Cardiac septum (tissue), 1 donor: ENCODE measurements at regions of chr5 and their contacts with region 1.

Region 1: GRCh38 chr5:138223532-138223931 is 10.4 kb upstream of the CDC23 start:
- DNase-seq: no peak

Region 2: DNA sequence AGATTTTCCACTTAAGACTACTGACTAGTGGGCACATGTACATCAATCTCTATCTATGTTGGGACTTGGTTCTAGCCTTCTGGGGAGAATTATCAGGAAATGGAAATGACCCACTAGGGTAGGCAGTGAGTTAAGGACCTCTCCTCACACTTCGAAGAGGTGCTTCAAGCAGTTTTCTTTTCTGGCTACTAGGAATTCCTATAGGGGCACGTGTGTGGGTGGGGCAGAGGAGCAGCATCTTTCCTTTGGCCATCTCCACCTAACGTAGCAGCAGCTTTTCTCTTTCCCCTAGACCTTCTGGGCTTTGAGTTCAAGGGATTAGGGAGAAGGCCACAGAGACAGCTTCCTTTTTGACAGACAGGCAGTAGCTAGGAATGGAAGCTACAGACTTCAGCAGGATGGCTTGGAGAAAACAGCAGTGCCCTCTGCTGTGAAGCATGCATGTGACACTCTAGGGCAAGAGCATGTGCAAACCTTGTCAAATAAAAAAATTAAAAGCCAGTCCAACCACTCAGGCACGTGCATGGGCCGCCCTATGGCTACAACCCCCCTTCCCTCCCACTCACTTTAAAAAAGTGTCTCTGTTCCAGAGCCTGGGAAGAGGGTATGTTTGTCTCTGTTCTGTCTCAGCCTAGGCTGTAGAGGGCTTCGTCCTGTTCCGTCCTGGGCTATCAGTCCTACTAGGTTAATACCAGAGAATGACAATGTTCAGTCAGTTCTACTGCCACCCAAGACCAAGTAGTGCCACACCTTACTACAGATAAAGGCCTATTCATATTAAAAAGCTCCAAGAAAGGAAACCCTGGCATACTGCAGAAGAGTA is 59.6 kb after region 1 on chr5:
- intact Hi-C with region 1: loop called (anchors 2 kb)
- DNase-seq: no peak

Region 3: GRCh38 chr5:138408023-138408422 is 184.5 kb after region 1 on chr5:
- intact Hi-C with region 1: loop called (anchors 5 kb)
- DNase-seq: no peak